Activated B cell treated with CpG ODN at 0.5 μM for 24 hours (primary cell): ENCODE measurements at regions of chr7 and their contacts with region 1.

Region 1: GRCh38 chr7:90708841-90709317 is 112.8 kb downstream of the CDK14 start:
- DNase-seq: no peak
- ATAC-seq: peak; percentile 40
- H3K4me3 Mint-ChIP-seq: peak overlapping the region; percentile 86
- H3K27ac Mint-ChIP-seq: peak overlapping the region; percentile 96
- H3K4me1 Mint-ChIP-seq: peaks cover 81% of the 10 kb centered on the region
- H3K27me3 Mint-ChIP-seq: no peaks in the 10 kb centered on the region
- CTCF ChIP-seq: no peak

Region 2: GRCh38 chr7:90271753-90272152 is 437.1 kb before region 1 on chr7:
- CTCF ChIA-PET with region 1: no interaction called
- POLR2A ChIA-PET with region 1: no interaction called
- intact Hi-C with region 1: no loop called
- DNase-seq: no peak
- ATAC-seq: no peak
- H3K4me3 Mint-ChIP-seq: no peak overlapping the region
- H3K27ac Mint-ChIP-seq: no peak overlapping the region
- H3K4me1 Mint-ChIP-seq: no peaks in the 10 kb centered on the region
- H3K27me3 Mint-ChIP-seq: no peaks in the 10 kb centered on the region
- CTCF ChIP-seq: no peak

Region 3: GRCh38 chr7:90455163-90456030 is 253.5 kb before region 1 on chr7:
- CTCF ChIA-PET with region 1: interaction called, 3 read pairs
- POLR2A ChIA-PET with region 1: no interaction called
- intact Hi-C with region 1: loop called (anchors 2 kb)
- DNase-seq: no peak
- ATAC-seq: peak; percentile 73
- H3K4me3 Mint-ChIP-seq: peak overlapping the region; percentile 46
- H3K27ac Mint-ChIP-seq: no peak overlapping the region
- H3K4me1 Mint-ChIP-seq: peaks cover 8% of the 10 kb centered on the region
- H3K27me3 Mint-ChIP-seq: peaks cover 6% of the 10 kb centered on the region
- CTCF ChIP-seq: peak; percentile 64

Region 4: GRCh38 chr7:90690159-90690858 is 18.6 kb before region 1 on chr7:
- CTCF ChIA-PET with region 1: interaction called, 6 read pairs
- POLR2A ChIA-PET with region 1: interaction called, 3 read pairs
- intact Hi-C with region 1: loop called (anchors 1 kb)
- DNase-seq: no peak
- ATAC-seq: peak; percentile 65
- H3K4me3 Mint-ChIP-seq: no peak overlapping the region
- H3K27ac Mint-ChIP-seq: no peak overlapping the region
- H3K4me1 Mint-ChIP-seq: peaks cover 44% of the 10 kb centered on the region
- H3K27me3 Mint-ChIP-seq: no peaks in the 10 kb centered on the region
- CTCF ChIP-seq: no peak

Region 5: GRCh38 chr7:90749262-90749661 is 40.4 kb after region 1 on chr7:
- CTCF ChIA-PET with region 1: interaction called, 23 read pairs
- POLR2A ChIA-PET with region 1: interaction called, 15 read pairs
- intact Hi-C with region 1: loop called (anchors 1 kb)
- DNase-seq: no peak
- ATAC-seq: peak; percentile 21
- H3K4me3 Mint-ChIP-seq: no peak overlapping the region
- H3K27ac Mint-ChIP-seq: peak overlapping the region; percentile 35
- H3K4me1 Mint-ChIP-seq: peaks cover 58% of the 10 kb centered on the region
- H3K27me3 Mint-ChIP-seq: no peaks in the 10 kb centered on the region
- CTCF ChIP-seq: no peak

Region 6: GRCh38 chr7:90966346-90966745 is 257.5 kb after region 1 on chr7:
- CTCF ChIA-PET with region 1: interaction called, 3 read pairs
- POLR2A ChIA-PET with region 1: no interaction called
- intact Hi-C with region 1: loop called (anchors 5 kb)
- DNase-seq: no peak
- ATAC-seq: peak; percentile 28
- H3K4me3 Mint-ChIP-seq: no peak overlapping the region
- H3K27ac Mint-ChIP-seq: peak overlapping the region; percentile 14
- H3K4me1 Mint-ChIP-seq: peaks cover 24% of the 10 kb centered on the region
- H3K27me3 Mint-ChIP-seq: no peaks in the 10 kb centered on the region
- CTCF ChIP-seq: no peak

Region 7: GRCh38 chr7:91636129-91636724 is 927.3 kb after region 1 on chr7:
- CTCF ChIA-PET with region 1: no interaction called
- POLR2A ChIA-PET with region 1: no interaction called
- intact Hi-C with region 1: loop called (anchors 5 kb)
- DNase-seq: no peak
- ATAC-seq: no peak
- H3K4me3 Mint-ChIP-seq: no peak overlapping the region
- H3K27ac Mint-ChIP-seq: no peak overlapping the region
- H3K4me1 Mint-ChIP-seq: no peaks in the 10 kb centered on the region
- H3K27me3 Mint-ChIP-seq: no peaks in the 10 kb centered on the region
- CTCF ChIP-seq: no peak